ENCODE measurements at regions of chr1 and their contacts with region 1.

Region 1: GRCh38 chr1:40979233-40980067 is at the start of gene CTPS1:
- DNase-seq: peak; percentile 82 to 97
- H3K4me3 ChIP-seq: peak within 1 kb of the TSS; percentile 92
- H3K27ac ChIP-seq: peak within 1 kb of the TSS; percentile 84
- H3K4me1 ChIP-seq: peaks cover 22% of the 10 kb centered on the region
- H3K27me3 ChIP-seq: no peaks in the 10 kb centered on the region
- CTCF ChIP-seq: no peak
- total RNA-seq, gene CTPS1: 80.5 and 91.9 TPM in 2 replicates

Region 2: GRCh38 chr1:39653546-39654031 is 1325.9 kb before region 1 on chr1:
- CTCF ChIA-PET with region 1: no interaction called
- POLR2A ChIA-PET with region 1: no interaction called
- intact Hi-C with region 1: no loop called
- DNase-seq: peak in 1 of 2 experiments; percentile 74
- H3K4me3 ChIP-seq: no peak overlapping the region
- H3K27ac ChIP-seq: no peak overlapping the region
- H3K4me1 ChIP-seq: no peaks in the 10 kb centered on the region
- H3K27me3 ChIP-seq: no peaks in the 10 kb centered on the region
- CTCF ChIP-seq: peak; percentile 92

Region 3: GRCh38 chr1:39762550-39763540 is 1216.6 kb before region 1 on chr1:
- CTCF ChIA-PET with region 1: no interaction called
- POLR2A ChIA-PET with region 1: interaction called, 10 read pairs
- intact Hi-C with region 1: no loop called
- DNase-seq: no peak
- H3K4me3 ChIP-seq: no peak overlapping the region
- H3K27ac ChIP-seq: no peak overlapping the region
- H3K4me1 ChIP-seq: no peaks in the 10 kb centered on the region
- H3K27me3 ChIP-seq: no peaks in the 10 kb centered on the region
- CTCF ChIP-seq: no peak

Region 4: DNA sequence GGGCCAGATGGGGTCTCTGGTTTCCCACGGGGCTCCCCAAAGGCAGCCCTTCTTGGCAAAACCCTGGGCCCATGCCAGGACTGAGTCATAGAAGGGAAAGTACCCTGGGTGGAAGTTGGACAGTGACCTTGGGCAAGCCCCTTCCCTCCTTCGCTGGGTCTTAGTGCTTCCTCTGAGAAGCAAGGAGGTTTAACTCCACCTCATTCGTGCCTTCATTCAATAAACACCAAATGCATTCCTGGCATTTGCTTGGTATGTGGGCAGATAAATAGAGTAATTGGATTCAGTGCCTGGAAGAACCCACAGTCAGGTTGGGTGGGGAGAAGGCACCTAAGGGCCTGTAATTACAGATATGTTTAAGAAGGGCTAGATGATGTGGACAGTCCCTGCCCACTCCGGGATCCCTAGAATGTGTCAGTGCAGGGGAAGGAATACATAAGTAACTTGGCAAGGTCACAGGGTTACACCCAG is 81.0 kb before region 1 on chr1:
- CTCF ChIA-PET with region 1: no interaction called
- POLR2A ChIA-PET with region 1: interaction called, 5 read pairs
- intact Hi-C with region 1: loop called (anchors 1 kb)
- DNase-seq: peak; percentile 79 to 91
- H3K4me3 ChIP-seq: peak overlapping the region; percentile 39; the same call in 1 of the 2 replicates
- H3K27ac ChIP-seq: peak overlapping the region; percentile 97
- H3K4me1 ChIP-seq: peaks cover 74% of the 10 kb centered on the region
- H3K27me3 ChIP-seq: no peaks in the 10 kb centered on the region
- CTCF ChIP-seq: no peak

Region 5: GRCh38 chr1:41030872-41031616 is 51.6 kb after region 1 on chr1:
- CTCF ChIA-PET with region 1: no interaction called
- POLR2A ChIA-PET with region 1: interaction called, 17 read pairs
- intact Hi-C with region 1: no loop called
- DNase-seq: no peak
- H3K4me3 ChIP-seq: no peak overlapping the region
- H3K27ac ChIP-seq: no peak overlapping the region
- H3K4me1 ChIP-seq: no peaks in the 10 kb centered on the region
- H3K27me3 ChIP-seq: no peaks in the 10 kb centered on the region
- CTCF ChIP-seq: no peak

Region 6: GRCh38 chr1:41268154-41268770 is 288.8 kb after region 1 on chr1:
- CTCF ChIA-PET with region 1: no interaction called
- POLR2A ChIA-PET with region 1: no interaction called
- intact Hi-C with region 1: no loop called
- DNase-seq: peak; percentile 50 to 81
- H3K4me3 ChIP-seq: no peak overlapping the region
- H3K27ac ChIP-seq: no peak overlapping the region
- H3K4me1 ChIP-seq: no peaks in the 10 kb centered on the region
- H3K27me3 ChIP-seq: no peaks in the 10 kb centered on the region
- CTCF ChIP-seq: peak; percentile 96

Region 7: GRCh38 chr1:41698916-41699860 is 719.7 kb after region 1 on chr1:
- CTCF ChIA-PET with region 1: no interaction called
- POLR2A ChIA-PET with region 1: no interaction called
- intact Hi-C with region 1: no loop called
- DNase-seq: no peak
- H3K4me3 ChIP-seq: no peak overlapping the region
- H3K27ac ChIP-seq: no peak overlapping the region
- H3K4me1 ChIP-seq: no peaks in the 10 kb centered on the region
- H3K27me3 ChIP-seq: no peaks in the 10 kb centered on the region
- CTCF ChIP-seq: no peak

Measured in PC-9 (cell line).